B cell (primary cell): ENCODE measurements at regions of chr19 and their contacts with region 1.

Region 1: DNA sequence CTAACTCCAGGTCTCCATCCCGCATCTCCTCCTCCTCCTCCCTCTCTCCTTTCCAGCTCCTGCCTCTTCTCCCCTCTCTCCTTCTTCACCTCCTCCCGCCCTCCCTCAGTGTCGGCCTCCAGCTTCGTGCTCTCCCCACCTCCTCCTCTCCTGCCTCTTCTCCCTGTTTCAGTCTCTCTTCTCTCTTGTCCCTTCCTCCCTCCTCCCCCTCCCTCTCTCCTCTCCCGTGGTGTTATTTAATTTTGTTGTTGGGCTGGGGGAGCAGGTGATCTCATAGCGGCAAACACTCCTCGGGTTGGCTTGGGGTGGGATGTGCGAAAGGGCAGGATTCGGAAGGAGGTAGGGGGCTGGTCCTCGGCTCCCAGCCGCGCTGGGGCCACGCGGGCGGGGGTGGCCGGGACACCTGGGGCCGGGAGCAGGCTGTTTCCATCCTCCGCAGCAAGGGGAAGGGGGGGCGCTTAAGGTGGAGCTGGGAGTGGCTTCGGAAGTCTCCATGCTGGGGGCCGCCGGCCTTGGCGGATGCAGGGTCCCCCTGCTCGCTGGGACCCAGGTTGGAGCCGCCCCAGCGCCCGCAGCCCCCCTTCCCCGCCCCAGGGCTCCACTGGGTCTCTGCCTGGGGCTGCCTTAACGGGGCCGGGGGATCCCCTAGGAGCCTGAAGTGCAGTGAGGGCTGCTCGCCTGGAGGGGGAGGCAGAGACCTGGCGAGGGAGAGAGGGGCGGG is at the start of gene CA11:
- DNase-seq: peak; percentile 94
- ATAC-seq: peak; percentile 87
- H3K4me3 ChIP-seq: peak within 1 kb of the TSS; percentile 52 to 95 (median 75)
- H3K4me3 Mint-ChIP-seq: peak within 1 kb of the TSS; percentile 96
- H3K27ac ChIP-seq: peak within 1 kb of the TSS; percentile 74 to 80
- H3K27ac Mint-ChIP-seq: peak within 1 kb of the TSS; percentile 98
- H3K4me1 ChIP-seq: peaks cover 23 to 45% of the 10 kb centered on the region in 2 donors
- H3K4me1 Mint-ChIP-seq: peaks cover 50% of the 10 kb centered on the region
- H3K27me3 ChIP-seq: no peaks in the 10 kb centered on the region
- H3K27me3 Mint-ChIP-seq: no peaks in the 10 kb centered on the region
- CTCF ChIP-seq: peak; percentile 80
- total RNA-seq, gene CA11: 25.7 and 27.7 TPM in 2 replicates

Region 2: DNA sequence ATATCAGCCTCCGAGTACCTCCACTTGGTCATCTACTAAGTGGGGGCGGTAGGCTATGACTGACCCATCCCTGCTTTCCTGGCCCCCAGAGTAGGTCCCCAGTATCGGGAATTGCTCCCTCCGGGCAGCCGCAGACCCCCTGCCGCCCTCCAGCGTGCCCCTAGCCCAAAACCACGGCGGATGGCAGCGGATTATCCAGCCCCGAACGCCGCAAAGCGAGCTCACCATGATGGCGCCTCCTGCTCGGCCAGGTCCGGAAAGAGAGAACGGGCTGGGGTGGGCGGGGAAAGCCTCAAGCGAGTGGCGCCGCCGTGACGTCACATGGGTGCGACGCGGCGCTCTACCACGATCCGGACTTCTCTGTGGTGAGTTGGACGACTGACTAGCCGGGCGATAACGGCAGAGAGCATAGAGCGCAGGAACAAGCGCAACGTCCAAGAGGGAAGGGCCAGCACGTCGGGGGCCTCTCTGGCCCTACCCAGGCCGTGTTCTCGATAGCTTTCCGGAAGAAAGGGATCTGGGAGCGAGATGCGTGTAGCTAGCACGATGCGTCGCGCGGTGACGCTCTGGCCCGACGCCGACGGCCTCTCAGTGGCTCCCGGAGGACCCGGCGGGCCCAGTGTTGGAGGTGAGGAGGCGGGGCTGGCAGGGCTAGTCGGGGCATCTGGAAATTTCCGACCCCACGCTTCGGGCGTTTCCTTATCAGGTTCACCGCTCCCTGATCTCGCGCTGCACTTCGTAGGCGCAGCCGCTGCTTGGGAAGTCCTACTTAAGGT is 27.1 kb before region 1 on chr19 and contains the starts of genes RPL18 and SPHK2:
- CTCF ChIA-PET with region 1: interaction called, 3 read pairs
- POLR2A ChIA-PET with region 1: interaction called, 19 read pairs
- intact Hi-C with region 1: no loop called
- DNase-seq: peak; percentile 99
- ATAC-seq: peak; percentile 82
- H3K4me3 ChIP-seq: peak within 1 kb of the TSS; percentile 95 to 100 (median 99)
- H3K4me3 Mint-ChIP-seq: peak within 1 kb of the TSS; percentile 98
- H3K27ac ChIP-seq: peak within 1 kb of the TSS; percentile 87 to 91
- H3K27ac Mint-ChIP-seq: peak within 1 kb of the TSS; percentile 98
- H3K4me1 ChIP-seq: peaks cover 25 to 45% of the 10 kb centered on the region in 2 donors
- H3K4me1 Mint-ChIP-seq: peaks cover 51% of the 10 kb centered on the region
- H3K27me3 ChIP-seq: no peaks in the 10 kb centered on the region
- H3K27me3 Mint-ChIP-seq: no peaks in the 10 kb centered on the region
- CTCF ChIP-seq: no peak
- total RNA-seq, gene RPL18: 2,217 and 2,248 TPM in 2 replicates
- total RNA-seq, gene SPHK2: 45.4 and 47.3 TPM in 2 replicates

Region 3: GRCh38 chr19:48660854-48661731 is 14.9 kb after region 1 on chr19:
- CTCF ChIA-PET with region 1: no interaction called
- POLR2A ChIA-PET with region 1: interaction called, 8 read pairs
- intact Hi-C with region 1: loop called (anchors 1 kb)
- DNase-seq: peak; percentile 94
- ATAC-seq: peak; percentile 93
- H3K4me3 ChIP-seq: peak overlapping the region in 4 of 5 experiments; percentile 30 to 56 (median 52)
- H3K4me3 Mint-ChIP-seq: peak overlapping the region; percentile 88
- H3K27ac ChIP-seq: peak overlapping the region; percentile 96 to 97
- H3K27ac Mint-ChIP-seq: peak overlapping the region; percentile 97
- H3K4me1 ChIP-seq: peaks cover 8 to 19% of the 10 kb centered on the region in 2 donors
- H3K4me1 Mint-ChIP-seq: peaks cover 16% of the 10 kb centered on the region
- H3K27me3 ChIP-seq: no peaks in the 10 kb centered on the region
- H3K27me3 Mint-ChIP-seq: no peaks in the 10 kb centered on the region
- CTCF ChIP-seq: no peak

Region 4: DNA sequence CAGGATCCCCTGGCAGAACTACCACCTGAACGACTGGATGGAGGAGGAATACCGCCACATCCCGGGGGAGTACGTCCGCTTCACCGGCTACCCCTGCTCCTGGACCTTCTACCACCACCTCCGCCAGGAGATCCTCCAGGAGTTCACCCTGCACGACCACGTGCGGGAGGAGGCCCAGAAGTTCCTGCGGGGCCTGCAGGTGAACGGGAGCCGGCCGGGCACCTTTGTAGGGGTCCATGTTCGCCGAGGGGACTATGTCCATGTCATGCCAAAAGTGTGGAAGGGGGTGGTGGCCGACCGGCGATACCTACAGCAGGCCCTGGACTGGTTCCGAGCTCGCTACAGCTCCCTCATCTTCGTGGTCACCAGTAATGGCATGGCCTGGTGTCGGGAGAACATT is 57.2 kb after region 1 on chr19:
- CTCF ChIA-PET with region 1: no interaction called
- POLR2A ChIA-PET with region 1: no interaction called
- intact Hi-C with region 1: no loop called
- DNase-seq: no peak
- ATAC-seq: no peak
- H3K4me3 ChIP-seq: no peak overlapping the region
- H3K4me3 Mint-ChIP-seq: no peak overlapping the region
- H3K27ac ChIP-seq: no peak overlapping the region
- H3K27ac Mint-ChIP-seq: no peak overlapping the region
- H3K4me1 ChIP-seq: no peaks in the 10 kb centered on the region
- H3K4me1 Mint-ChIP-seq: no peaks in the 10 kb centered on the region
- H3K27me3 ChIP-seq: peaks cover 0 to under 1% (median 0%) of the 10 kb centered on the region in 4 experiments
- H3K27me3 Mint-ChIP-seq: no peaks in the 10 kb centered on the region
- CTCF ChIP-seq: no peak

Region 5: DNA sequence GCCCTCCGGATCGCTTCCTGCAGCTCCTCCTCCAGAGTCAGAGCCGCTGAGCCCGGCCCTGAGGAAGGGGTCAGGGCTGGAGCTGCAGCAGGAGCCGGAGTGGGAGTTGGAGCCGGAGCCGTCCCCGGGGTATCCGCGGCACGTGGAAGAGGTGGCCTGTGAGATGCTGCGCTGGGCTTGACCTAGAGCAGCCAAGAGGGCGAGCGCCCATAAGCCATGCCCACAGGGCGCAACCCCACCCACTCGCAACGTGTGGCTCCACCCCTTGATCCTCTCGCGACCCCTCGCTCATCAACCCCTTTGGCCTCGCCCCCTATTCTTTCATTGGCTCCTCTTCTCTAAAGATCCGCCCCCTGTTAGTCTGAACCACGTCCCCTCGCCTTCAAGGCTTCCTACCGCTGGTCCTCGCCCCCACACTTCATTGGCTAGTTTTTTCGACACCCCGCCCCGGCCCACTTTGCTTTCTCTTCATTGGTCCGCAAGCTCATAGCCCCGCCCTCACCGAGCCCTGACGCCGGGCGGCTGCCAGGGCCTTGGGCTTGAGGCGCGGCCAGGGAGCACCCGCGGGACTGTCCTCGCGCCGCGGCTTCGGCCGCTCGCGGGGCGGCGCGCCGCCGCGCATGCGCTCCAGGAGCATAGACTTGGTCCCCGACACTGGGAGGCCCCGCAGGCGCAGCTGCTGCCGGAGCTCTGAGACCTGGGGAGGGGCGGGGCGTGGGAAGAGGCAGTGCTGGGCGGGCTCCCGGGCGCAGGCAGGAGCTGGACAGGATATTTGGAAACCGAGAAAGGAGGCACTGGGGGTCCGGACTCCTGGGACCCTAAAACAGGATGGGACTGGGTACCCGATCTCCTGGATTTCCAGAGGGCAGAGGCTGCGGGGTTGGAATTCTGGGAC is 68.0 kb after region 1 on chr19:
- CTCF ChIA-PET with region 1: interaction called, 4 read pairs
- POLR2A ChIA-PET with region 1: interaction called, 5 read pairs
- intact Hi-C with region 1: loop called (anchors 1 kb)
- DNase-seq: peak; percentile 99
- ATAC-seq: peak; percentile 90
- H3K4me3 ChIP-seq: peak overlapping the region; percentile 39 to 86 (median 74)
- H3K4me3 Mint-ChIP-seq: peak overlapping the region; percentile 89
- H3K27ac ChIP-seq: peak overlapping the region; percentile 67 to 76
- H3K27ac Mint-ChIP-seq: peak overlapping the region; percentile 82
- H3K4me1 ChIP-seq: peaks cover 14 to 22% of the 10 kb centered on the region in 2 donors
- H3K4me1 Mint-ChIP-seq: peaks cover 21% of the 10 kb centered on the region
- H3K27me3 ChIP-seq: no peaks in the 10 kb centered on the region
- H3K27me3 Mint-ChIP-seq: no peaks in the 10 kb centered on the region
- CTCF ChIP-seq: no peak

Region 6: GRCh38 chr19:48835734-48836088 is 189.6 kb after region 1 on chr19:
- CTCF ChIA-PET with region 1: interaction called, 5 read pairs
- POLR2A ChIA-PET with region 1: no interaction called
- intact Hi-C with region 1: loop called (anchors 1 kb)
- DNase-seq: peak; percentile 96
- ATAC-seq: peak; percentile 87
- H3K4me3 ChIP-seq: peak overlapping the region in 4 of 5 experiments; percentile 25 to 59 (median 54)
- H3K4me3 Mint-ChIP-seq: peak overlapping the region; percentile 98
- H3K27ac ChIP-seq: peak overlapping the region in 1 of 2 donors; percentile 56
- H3K27ac Mint-ChIP-seq: peak overlapping the region; percentile 93
- H3K4me1 ChIP-seq: peaks cover 16 to 25% of the 10 kb centered on the region in 2 donors
- H3K4me1 Mint-ChIP-seq: peaks cover 25% of the 10 kb centered on the region
- H3K27me3 ChIP-seq: peaks cover 0 to 13% (median 1%) of the 10 kb centered on the region in 4 experiments
- H3K27me3 Mint-ChIP-seq: no peaks in the 10 kb centered on the region
- CTCF ChIP-seq: peak; percentile 82